ENCODE measurements at regions of chr4 and their contacts with region 1.

Region 1: DNA sequence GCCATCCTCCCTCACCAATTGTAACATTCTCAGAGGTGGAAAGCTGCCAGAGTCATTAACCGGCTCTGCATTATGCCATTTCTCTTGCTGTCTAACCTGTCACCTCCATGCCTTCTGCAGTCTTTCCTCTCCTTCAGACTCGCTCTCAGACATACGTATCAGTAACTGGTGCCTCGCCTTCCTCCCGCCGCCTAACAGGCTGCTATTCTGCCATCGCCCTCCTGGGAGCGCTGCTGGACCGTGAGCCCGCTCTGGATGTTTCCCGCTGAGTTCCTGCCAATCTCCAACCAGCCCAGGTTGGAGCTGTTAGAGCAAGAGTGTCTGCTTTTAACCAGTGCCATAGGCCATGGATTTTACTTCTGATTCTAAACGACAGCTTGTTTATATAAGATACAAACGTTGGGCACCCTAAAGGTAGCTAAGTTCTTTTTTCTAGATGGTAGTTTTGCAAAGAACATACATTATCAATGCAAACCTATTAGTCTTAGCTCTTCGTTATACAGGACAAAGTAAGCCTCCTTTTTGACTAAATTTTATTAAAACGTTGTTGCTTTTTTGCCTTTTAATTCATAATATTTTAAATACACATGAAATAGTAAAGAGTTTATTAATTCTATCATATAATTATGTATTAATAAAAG is 59.5 kb upstream of the NEIL3 start:
- DNase-seq: peak; percentile 70
- H3K4me3 ChIP-seq: no peak overlapping the region; a peak in 2 of 4 replicates
- H3K27ac ChIP-seq: no peak overlapping the region
- H3K4me1 ChIP-seq: peaks cover 0 to 12% of the 10 kb centered on the region in 2 experiments; a peak in 1 of 4 replicates
- H3K27me3 ChIP-seq: no peaks in the 10 kb centered on the region
- CTCF ChIP-seq: peak; percentile 98
- EP300 ChIP-seq: no peak
- RAD21 ChIP-seq: peak; percentile 100

Region 2: GRCh38 chr4:176988226-176988625 is 261.9 kb before region 1 on chr4:
- CTCF ChIA-PET with region 1: no interaction called
- POLR2A ChIA-PET with region 1: no interaction called
- DNase-seq: no peak
- H3K4me3 ChIP-seq: no peak overlapping the region
- H3K27ac ChIP-seq: peak overlapping the region; percentile 34 to 87; a peak in 3 of 4 replicates
- H3K4me1 ChIP-seq: no peaks in the 10 kb centered on the region
- H3K27me3 ChIP-seq: no peaks in the 10 kb centered on the region
- CTCF ChIP-seq: no peak
- EP300 ChIP-seq: peak in 1 of 2 experiments; percentile 65; a peak in 1 of 4 replicates
- RAD21 ChIP-seq: no peak

Region 3: GRCh38 chr4:177239878-177240277 is 10.3 kb before region 1 on chr4:
- CTCF ChIA-PET with region 1: interaction called, 21 read pairs
- POLR2A ChIA-PET with region 1: no interaction called
- DNase-seq: peak; percentile 24
- H3K4me3 ChIP-seq: no peak overlapping the region
- H3K27ac ChIP-seq: no peak overlapping the region
- H3K4me1 ChIP-seq: no peaks in the 10 kb centered on the region; a peak in 1 of 4 replicates
- H3K27me3 ChIP-seq: no peaks in the 10 kb centered on the region
- CTCF ChIP-seq: 0 out of 2 replicates have a peak, but pooled peaks have one; percentile 16
- EP300 ChIP-seq: no peak
- RAD21 ChIP-seq: peak; percentile 58

Region 4: GRCh38 chr4:177266506-177266905 is 16.3 kb after region 1 on chr4:
- CTCF ChIA-PET with region 1: interaction called, 17 read pairs
- POLR2A ChIA-PET with region 1: no interaction called
- DNase-seq: no peak
- H3K4me3 ChIP-seq: no peak overlapping the region
- H3K27ac ChIP-seq: no peak overlapping the region
- H3K4me1 ChIP-seq: peaks cover 0 to 4% of the 10 kb centered on the region in 2 experiments; a peak in 2 of 4 replicates
- H3K27me3 ChIP-seq: no peaks in the 10 kb centered on the region
- CTCF ChIP-seq: no peak
- EP300 ChIP-seq: no peak
- RAD21 ChIP-seq: no peak

Region 5: GRCh38 chr4:177339477-177340374 is 89.5 kb after region 1 on chr4:
- CTCF ChIA-PET with region 1: interaction called, 112 read pairs
- POLR2A ChIA-PET with region 1: no interaction called
- DNase-seq: peak; percentile 45
- H3K4me3 ChIP-seq: no peak overlapping the region
- H3K27ac ChIP-seq: no peak overlapping the region
- H3K4me1 ChIP-seq: no peaks in the 10 kb centered on the region; a peak in 1 of 4 replicates
- H3K27me3 ChIP-seq: no peaks in the 10 kb centered on the region
- CTCF ChIP-seq: peak; percentile 79
- EP300 ChIP-seq: no peak
- RAD21 ChIP-seq: peak; percentile 86

Region 6: DNA sequence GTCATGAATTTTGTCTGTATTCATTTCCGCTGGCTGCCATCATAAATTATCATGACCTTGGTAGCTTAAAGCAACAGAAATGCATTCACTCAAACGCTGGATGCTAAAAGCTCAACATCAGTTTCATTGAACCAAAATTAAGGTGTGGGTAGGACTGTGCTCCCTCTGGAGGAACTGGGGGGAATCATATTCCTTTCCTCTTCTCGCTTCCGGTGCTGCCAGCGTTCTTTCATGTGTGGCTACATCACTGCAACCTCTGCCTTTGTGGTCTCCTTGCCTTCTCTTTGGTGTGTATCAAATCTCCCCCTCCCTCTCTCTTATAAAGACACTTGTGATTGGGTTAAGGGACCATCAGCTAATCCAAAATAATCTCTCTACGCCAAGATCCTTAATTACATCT is 99.0 kb after region 1 on chr4:
- CTCF ChIA-PET with region 1: interaction called, 30 read pairs
- POLR2A ChIA-PET with region 1: no interaction called
- DNase-seq: no peak
- H3K4me3 ChIP-seq: no peak overlapping the region
- H3K27ac ChIP-seq: no peak overlapping the region
- H3K4me1 ChIP-seq: no peaks in the 10 kb centered on the region
- H3K27me3 ChIP-seq: no peaks in the 10 kb centered on the region
- CTCF ChIP-seq: no peak
- EP300 ChIP-seq: no peak
- RAD21 ChIP-seq: no peak